ENCODE measurements at regions of chr22 and their contacts with region 1.

Region 1: DNA sequence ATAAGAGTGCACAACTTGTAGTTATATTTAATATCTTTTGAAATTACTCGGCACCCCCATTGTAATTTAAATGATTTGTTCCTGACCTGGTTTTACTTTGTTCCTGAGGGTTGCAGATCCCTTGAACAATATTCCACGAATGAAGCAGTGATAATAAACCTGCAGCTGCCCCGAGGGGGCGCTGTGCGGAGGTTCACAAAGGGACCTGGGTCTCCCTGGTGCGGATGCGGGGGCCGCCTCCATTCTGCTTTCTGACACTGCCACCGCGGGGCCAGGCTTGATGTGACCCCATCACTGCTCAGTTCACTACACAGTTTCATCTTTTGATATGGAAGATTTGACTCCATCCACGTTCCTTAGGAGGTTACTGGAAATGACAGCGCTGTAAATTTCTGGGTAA is 62.9 kb upstream of the PRODH start:
- DNase-seq: no peak
- ATAC-seq: no peak
- H3K4me3 ChIP-seq: no peak overlapping the region
- H3K27ac ChIP-seq: no peak overlapping the region
- H3K4me1 ChIP-seq: no peaks in the 10 kb centered on the region
- H3K27me3 ChIP-seq: peaks cover 0 to 59% (median 12%) of the 10 kb centered on the region in 9 donors
- CTCF ChIP-seq: peak in 4 of 12 donors; percentile 6 to 22 (median 12)
- POLR2A ChIP-seq: no peak

Region 2: DNA sequence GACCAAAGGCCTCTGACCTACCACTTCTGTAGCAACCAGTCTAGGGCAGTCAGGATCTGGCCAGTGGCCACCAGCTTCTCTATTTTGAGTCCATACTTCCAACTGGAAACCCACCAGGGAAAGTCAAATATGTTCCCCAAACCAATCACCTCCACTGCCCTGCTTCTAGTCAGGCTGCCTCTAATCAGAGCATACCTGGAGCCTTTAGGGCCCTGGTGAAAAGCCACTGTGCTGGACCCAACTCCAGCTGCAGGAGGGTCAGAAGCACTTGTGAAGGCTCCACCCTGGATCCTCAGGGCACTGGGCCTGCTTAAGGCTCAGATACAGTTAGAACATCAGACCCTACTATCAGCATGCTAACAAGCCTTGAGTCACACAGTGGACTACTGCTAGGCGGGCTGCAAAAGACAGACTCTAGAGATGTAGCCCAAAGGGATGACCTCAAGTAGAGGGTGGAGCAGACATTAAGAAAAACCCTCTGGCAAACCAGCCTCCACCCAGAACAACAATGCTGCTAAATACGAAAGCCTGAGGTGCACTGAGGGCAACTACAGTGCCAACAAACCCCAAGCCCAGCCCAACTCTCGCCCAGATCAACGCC is 54.0 kb after region 1 on chr22:
- intact Hi-C with region 1: loop called in 1 of 10 experiments (anchors 5 kb)
- DNase-seq: peak in 1 of 5 donors; percentile 10
- ATAC-seq: peak in 1 of 4 donors; percentile 35
- H3K4me3 ChIP-seq: no peak overlapping the region
- H3K27ac ChIP-seq: no peak overlapping the region
- H3K4me1 ChIP-seq: peaks cover 0 to 9% (median 0%) of the 10 kb centered on the region in 12 donors
- H3K27me3 ChIP-seq: no peaks in the 10 kb centered on the region
- CTCF ChIP-seq: no peak
- POLR2A ChIP-seq: no peak

Region 3: GRCh38 chr22:19398206-19398605 is 399.2 kb after region 1 on chr22:
- intact Hi-C with region 1: no loop called
- DNase-seq: no peak
- ATAC-seq: peak in 2 of 4 donors; percentile 24 to 31
- H3K4me3 ChIP-seq: no peak overlapping the region
- H3K27ac ChIP-seq: no peak overlapping the region
- H3K4me1 ChIP-seq: peaks cover 0 to 5% (median 0%) of the 10 kb centered on the region in 12 donors
- H3K27me3 ChIP-seq: no peaks in the 10 kb centered on the region
- CTCF ChIP-seq: no peak
- POLR2A ChIP-seq: no peak

Measured in heart left ventricle (tissue), 16 donors.